ENCODE measurements at regions of chr3 and their contacts with region 1.

Region 1: DNA sequence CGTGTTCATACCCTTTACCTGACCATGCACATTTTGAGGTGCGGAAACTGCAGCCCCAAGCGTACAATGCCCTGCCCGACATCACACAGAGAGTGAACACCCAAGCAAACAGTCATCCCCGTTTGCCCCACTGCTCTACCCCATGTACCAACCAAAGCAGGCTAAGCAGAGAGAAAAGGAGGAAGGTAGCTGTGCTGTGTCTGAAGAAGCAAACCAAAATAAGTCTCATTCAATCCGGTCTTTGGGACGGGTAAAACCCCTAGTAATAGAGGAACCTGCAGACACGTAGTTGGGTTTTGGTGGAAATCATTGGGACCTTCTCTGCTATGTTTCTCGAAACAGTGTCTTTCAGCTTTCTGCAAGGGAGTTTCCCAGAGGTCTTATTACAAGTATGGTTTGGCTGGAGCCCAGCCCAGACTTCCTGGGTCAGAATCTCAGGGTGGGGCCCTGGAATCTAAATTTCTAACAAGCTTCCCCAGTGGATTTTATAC is 164.6 kb upstream of the HES1 start:
- DNase-seq: peak; percentile 37
- ATAC-seq: peak; percentile 93
- H3K4me3 Mint-ChIP-seq: peak overlapping the region; percentile 77
- H3K27ac Mint-ChIP-seq: peak overlapping the region; percentile 91
- H3K4me1 Mint-ChIP-seq: peaks cover 29% of the 10 kb centered on the region
- H3K27me3 Mint-ChIP-seq: peaks cover 10% of the 10 kb centered on the region
- CTCF ChIP-seq: no peak

Region 2: GRCh38 chr3:193148494-193149473 is 822.5 kb before region 1 on chr3:
- CTCF ChIA-PET with region 1: no interaction called
- POLR2A ChIA-PET with region 1: no interaction called
- intact Hi-C with region 1: no loop called
- DNase-seq: no peak
- ATAC-seq: no peak
- H3K4me3 Mint-ChIP-seq: no peak overlapping the region
- H3K27ac Mint-ChIP-seq: no peak overlapping the region
- H3K4me1 Mint-ChIP-seq: no peaks in the 10 kb centered on the region
- H3K27me3 Mint-ChIP-seq: no peaks in the 10 kb centered on the region
- CTCF ChIP-seq: no peak

Region 3: DNA sequence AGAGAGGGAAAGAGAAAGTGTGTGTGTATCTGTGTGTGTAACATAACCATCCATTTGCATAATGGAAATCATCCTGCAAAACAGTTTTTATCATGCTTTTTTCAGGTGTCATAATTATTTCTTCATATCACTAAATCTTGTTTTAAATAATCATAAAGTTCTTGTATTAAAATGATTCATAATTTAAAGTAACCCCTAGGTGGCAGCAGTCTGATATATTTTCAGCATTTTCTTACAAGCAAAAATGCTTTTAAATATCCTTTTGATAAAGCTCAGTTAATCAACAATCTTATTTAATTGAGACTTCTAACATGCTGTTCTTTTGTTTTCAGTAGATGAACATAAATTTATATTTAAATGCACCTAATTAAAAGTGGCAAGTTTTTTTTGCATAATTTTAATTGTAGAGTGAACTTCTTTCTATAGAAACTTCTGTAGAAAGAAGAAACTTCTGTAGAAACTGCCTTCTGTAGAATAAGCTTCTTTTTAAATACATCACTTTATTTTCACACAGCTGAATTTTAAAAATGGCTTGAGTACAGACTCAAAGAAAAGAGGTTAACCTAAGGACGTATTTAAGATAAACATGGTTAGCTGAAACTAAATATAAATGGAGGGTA is 305.8 kb before region 1 on chr3:
- CTCF ChIA-PET with region 1: interaction called, 3 read pairs
- POLR2A ChIA-PET with region 1: no interaction called
- intact Hi-C with region 1: loop called (anchors 10 kb)
- DNase-seq: no peak
- ATAC-seq: no peak
- H3K4me3 Mint-ChIP-seq: no peak overlapping the region
- H3K27ac Mint-ChIP-seq: no peak overlapping the region
- H3K4me1 Mint-ChIP-seq: peaks cover 6% of the 10 kb centered on the region
- H3K27me3 Mint-ChIP-seq: no peaks in the 10 kb centered on the region
- CTCF ChIP-seq: peak; percentile 95

Region 4: DNA sequence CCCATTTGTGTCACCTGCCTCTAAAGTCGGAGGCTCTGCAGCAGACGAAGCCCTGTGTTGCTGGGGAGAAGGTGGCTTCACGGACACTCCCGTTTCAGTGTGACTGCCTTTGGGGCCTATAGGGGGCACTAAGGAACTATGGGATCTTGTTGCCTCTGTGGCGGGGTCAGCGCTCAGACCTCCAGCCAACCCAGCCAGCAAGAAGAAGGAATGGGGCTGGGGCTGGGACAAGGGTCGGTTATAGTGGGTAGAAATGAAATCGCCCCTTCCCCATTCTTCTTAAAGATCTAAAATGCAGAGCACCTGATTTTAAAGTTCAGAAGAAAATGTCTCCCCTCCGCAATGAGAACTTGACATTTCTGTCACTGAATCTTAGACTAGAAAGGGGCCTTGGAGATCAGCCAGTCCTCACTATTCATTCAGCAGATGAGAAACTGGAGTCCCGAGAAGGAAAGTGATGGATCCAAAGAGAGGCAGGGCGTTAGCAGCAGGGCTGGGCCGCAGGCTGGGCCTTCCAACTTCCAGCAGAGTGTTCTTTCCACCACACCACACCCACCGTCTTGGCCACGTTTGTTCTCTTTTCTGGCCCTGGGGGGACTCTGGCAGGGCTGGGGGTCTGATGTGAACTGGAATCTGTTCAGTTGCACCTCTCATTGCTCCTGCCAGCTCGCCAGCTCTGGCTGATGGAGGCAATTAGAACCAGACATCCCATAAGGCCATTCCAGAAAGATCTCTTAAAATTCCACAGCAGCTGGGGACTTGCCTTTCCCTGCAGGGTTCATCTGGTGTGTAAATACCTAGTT is 182.9 kb before region 1 on chr3:
- CTCF ChIA-PET with region 1: interaction called, 3 read pairs
- POLR2A ChIA-PET with region 1: no interaction called
- intact Hi-C with region 1: loop called (anchors 1 kb)
- DNase-seq: peak; percentile 36
- ATAC-seq: peak; percentile 98
- H3K4me3 Mint-ChIP-seq: no peak overlapping the region
- H3K27ac Mint-ChIP-seq: peak overlapping the region; percentile 15
- H3K4me1 Mint-ChIP-seq: peaks cover 16% of the 10 kb centered on the region
- H3K27me3 Mint-ChIP-seq: peaks cover 25% of the 10 kb centered on the region
- CTCF ChIP-seq: peak; percentile 34

Region 5: GRCh38 chr3:194003125-194004057 is 32.1 kb after region 1 on chr3:
- CTCF ChIA-PET with region 1: no interaction called
- POLR2A ChIA-PET with region 1: interaction called, 11 read pairs
- intact Hi-C with region 1: loop called (anchors 1 kb)
- DNase-seq: peak; percentile 70
- ATAC-seq: peak; percentile 94
- H3K4me3 Mint-ChIP-seq: peak overlapping the region; percentile 76
- H3K27ac Mint-ChIP-seq: peak overlapping the region; percentile 65
- H3K4me1 Mint-ChIP-seq: peaks cover 40% of the 10 kb centered on the region
- H3K27me3 Mint-ChIP-seq: peaks cover 6% of the 10 kb centered on the region
- CTCF ChIP-seq: no peak

Region 6: GRCh38 chr3:194070634-194071409 is 99.5 kb after region 1 on chr3:
- CTCF ChIA-PET with region 1: interaction called, 3 read pairs
- POLR2A ChIA-PET with region 1: interaction called, 14 read pairs
- intact Hi-C with region 1: loop called (anchors 1 kb)
- DNase-seq: peak; percentile 93
- ATAC-seq: peak; percentile 93
- H3K4me3 Mint-ChIP-seq: peak overlapping the region; percentile 76
- H3K27ac Mint-ChIP-seq: peak overlapping the region; percentile 84
- H3K4me1 Mint-ChIP-seq: peaks cover 41% of the 10 kb centered on the region
- H3K27me3 Mint-ChIP-seq: no peaks in the 10 kb centered on the region
- CTCF ChIP-seq: no peak

Region 7: GRCh38 chr3:194204042-194204987 is 233.0 kb after region 1 on chr3:
- CTCF ChIA-PET with region 1: no interaction called
- POLR2A ChIA-PET with region 1: no interaction called
- intact Hi-C with region 1: loop called (anchors 2 kb)
- DNase-seq: peak; percentile 30
- ATAC-seq: peak; percentile 61
- H3K4me3 Mint-ChIP-seq: peak overlapping the region; percentile 80
- H3K27ac Mint-ChIP-seq: peak overlapping the region; percentile 54
- H3K4me1 Mint-ChIP-seq: peaks cover 32% of the 10 kb centered on the region
- H3K27me3 Mint-ChIP-seq: peaks cover 32% of the 10 kb centered on the region
- CTCF ChIP-seq: no peak

Measured in activated B cell treated with CpG ODN at 0.5 μM for 24 hours (primary cell).